ENCODE measurements at regions of chr9 and their contacts with region 1.

Region 1: DNA sequence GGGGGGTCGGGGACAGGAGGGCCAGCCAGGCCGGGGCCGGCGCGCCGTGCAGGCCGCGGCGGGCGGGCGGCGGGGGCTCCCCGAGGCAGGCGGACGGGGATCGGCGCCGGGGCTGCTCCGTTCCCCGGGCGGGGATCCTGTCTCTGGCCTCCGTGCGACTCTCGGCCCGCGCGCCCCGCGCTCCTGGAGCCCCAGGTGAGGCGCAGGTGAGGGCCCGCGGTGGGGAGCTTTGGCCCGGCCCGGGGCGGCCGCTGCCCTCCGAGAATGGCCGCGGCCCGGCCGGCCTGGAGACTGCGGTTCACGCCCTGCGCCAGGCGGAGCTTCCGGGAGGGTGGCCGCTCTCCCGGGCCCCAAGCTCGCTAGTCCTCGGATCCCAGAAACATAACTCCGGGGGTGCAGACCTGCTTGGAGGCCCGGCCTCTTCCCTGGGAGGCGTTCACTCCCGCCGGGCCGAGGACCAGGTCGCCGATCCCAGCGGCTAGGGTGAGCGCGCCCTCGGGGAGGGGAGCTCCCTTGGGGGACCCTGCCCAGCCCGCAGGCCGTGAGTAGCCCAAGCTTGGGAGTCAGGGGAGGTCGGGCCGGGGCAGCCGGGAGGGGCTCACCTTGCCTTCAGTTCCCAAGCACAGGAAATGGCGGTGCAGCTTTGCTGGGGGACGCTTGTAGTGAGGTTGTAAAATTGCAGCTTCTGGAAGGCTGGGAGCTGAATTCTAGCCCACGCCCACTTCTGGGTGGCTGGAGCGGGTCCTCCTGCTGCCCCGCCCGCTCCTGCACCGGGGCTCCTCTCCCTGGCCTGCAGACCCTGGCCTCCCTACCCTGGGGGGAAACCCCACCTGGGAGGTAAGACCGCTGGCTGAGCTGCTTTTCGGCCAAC is 724 bp downstream of the PPP1R26 start:
- DNase-seq: peak; percentile 58
- H3K4me3 ChIP-seq: peak overlapping the region; percentile 93
- H3K4me3 Mint-ChIP-seq: peak overlapping the region; percentile 65
- H3K27ac Mint-ChIP-seq: no peak overlapping the region
- H3K4me1 ChIP-seq: no peaks in the 10 kb centered on the region
- H3K4me1 Mint-ChIP-seq: no peaks in the 10 kb centered on the region
- H3K27me3 ChIP-seq: no peaks in the 10 kb centered on the region
- H3K27me3 Mint-ChIP-seq: no peaks in the 10 kb centered on the region
- CTCF ChIP-seq: no peak

Region 2: DNA sequence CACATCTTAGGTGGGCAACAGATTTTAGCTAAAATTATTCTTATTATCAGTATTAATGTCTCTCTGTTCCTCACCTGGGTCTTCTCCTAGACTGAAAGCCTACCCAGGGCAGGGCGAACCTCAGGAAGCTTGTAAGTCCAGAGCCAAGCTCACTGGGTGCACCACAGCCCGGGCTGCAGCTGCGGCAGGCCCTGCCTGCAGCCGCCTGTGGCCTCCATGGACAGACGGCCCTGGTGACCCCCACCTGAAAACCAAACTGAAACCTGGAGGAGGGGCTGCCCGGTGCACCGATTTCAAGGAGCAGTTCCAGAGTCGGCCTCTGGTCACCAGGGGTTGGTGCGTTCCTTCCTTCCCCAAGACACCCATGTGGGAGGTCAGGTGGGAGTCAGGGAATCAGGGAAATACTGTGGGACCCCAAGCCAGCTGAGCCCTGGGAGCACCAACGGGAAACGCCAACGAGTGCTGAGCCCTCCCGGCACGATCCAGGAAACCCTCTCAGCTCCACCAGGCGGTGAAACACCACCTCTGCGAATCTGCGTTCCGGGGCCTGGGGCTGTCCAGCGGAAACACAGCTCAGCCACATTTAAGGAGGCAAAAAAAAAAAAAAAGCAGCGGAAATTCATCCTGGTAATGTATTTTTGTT is 69.4 kb before region 1 on chr9:
- CTCF ChIA-PET with region 1: no interaction called
- POLR2A ChIA-PET with region 1: no interaction called
- intact Hi-C with region 1: no loop called
- DNase-seq: peak in 1 of 2 experiments; percentile 11
- H3K4me3 ChIP-seq: no peak overlapping the region
- H3K4me3 Mint-ChIP-seq: no peak overlapping the region
- H3K27ac Mint-ChIP-seq: no peak overlapping the region
- H3K4me1 ChIP-seq: no peaks in the 10 kb centered on the region
- H3K4me1 Mint-ChIP-seq: no peaks in the 10 kb centered on the region
- H3K27me3 ChIP-seq: no peaks in the 10 kb centered on the region
- H3K27me3 Mint-ChIP-seq: peaks cover 6% of the 10 kb centered on the region
- CTCF ChIP-seq: no peak

Region 3: DNA sequence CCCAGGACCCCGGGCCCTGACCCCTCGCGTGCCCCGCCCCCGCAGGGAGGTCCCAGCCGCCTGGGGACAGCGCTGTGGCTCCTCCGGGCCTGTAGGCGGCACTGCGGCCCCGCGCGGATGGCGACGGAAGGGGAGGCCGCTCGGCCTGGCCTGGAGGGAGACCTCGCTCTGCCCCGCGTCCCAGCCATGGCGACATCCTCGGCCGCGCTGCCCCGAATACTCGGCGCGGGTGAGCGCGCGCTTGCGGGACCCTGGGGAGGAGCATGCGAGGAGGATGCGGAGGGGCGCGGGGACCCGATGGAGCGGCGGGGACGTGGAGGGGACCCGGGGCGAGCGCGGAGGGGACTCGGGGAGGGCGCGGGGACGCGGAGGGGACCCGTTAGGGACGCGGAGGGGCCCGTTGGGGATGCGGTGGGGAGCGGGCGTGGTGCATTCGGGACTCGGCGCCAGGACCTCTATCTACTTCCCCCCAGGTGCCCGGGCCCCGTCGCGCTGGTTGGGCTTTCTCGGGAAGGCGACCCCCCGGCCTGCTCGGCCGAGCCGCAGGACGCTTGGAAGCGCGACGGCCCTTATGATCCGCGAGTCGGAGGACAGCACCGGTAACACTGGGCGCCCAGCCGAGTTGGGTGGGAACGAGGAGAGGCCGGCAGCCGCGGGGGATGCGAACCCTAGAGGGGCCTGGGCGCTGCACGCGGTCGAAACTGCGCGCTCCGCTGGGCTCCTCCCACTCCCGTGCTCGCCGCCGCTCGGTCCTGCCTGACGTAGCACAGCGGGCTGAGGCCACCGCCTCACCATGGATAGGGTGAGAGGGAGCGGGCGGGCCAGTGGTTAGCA is 20.4 kb after region 1 on chr9 and contains the start of gene MRPS2:
- CTCF ChIA-PET with region 1: interaction called, 3 read pairs
- POLR2A ChIA-PET with region 1: no interaction called
- intact Hi-C with region 1: loop called (anchors 2 kb)
- DNase-seq: peak; percentile 89 to 95
- H3K4me3 ChIP-seq: peak within 1 kb of the TSS; percentile 91
- H3K4me3 Mint-ChIP-seq: peak within 1 kb of the TSS; percentile 75
- H3K27ac Mint-ChIP-seq: peak within 1 kb of the TSS; percentile 89
- H3K4me1 ChIP-seq: peaks cover 12% of the 10 kb centered on the region; the same call in 1 of the 2 replicates
- H3K4me1 Mint-ChIP-seq: no peaks in the 10 kb centered on the region
- H3K27me3 ChIP-seq: no peaks in the 10 kb centered on the region
- H3K27me3 Mint-ChIP-seq: no peaks in the 10 kb centered on the region
- CTCF ChIP-seq: peak; percentile 74 to 88
- total RNA-seq, gene MRPS2: 65.5 and 66.9 TPM in 2 replicates

Measured in Caco-2 (cell line).